A549 (cell line): ENCODE measurements at regions of chr7 and their contacts with region 1.

Region 1: DNA sequence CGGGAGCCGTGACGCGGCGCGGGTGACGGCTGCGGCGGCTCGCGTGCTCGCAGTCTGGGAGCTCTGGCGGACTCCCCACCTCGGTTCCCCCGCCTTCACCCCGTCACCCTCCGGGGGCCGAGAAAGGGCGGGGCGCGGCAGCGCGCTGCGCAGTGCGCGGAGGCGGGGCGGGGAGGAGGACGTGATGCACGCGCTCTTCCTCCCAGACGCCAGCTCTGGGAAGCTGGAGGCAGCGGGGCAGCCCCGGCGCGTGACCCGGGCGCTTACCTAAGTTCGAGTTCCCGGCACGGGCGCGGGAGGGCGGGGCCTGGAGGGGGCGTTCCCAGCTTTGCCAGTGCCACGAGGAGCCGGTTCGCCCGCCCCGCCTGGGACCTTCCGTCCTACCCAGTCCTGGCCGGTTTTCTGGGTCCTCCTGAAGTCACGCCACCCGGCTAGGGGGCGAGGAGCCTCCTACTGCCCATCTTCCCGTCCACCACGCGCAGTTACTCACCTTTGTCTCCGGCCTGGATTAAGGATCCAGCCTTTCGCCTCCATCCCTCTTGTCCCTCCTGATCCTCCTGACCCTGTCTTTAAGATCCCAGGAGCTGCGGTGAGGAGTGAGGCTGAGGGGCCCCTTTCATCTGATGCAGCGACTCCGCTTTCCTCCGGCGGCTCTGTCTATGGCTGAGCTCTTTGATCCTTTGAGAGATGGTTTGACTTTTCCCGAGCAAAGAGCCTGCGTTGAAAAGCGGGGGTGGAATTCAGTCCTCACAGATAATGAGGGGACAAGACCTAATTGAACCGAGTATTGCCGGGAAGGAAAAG is 470 bp upstream of the NAMPT start:
- DNase-seq: peak; percentile 77 to 99
- ATAC-seq: peak; percentile 86 to 90
- H3K4me3 ChIP-seq: peak overlapping the region; percentile 70
- H3K27ac ChIP-seq: peak overlapping the region; percentile 92 to 98
- H3K4me1 ChIP-seq: peaks cover 30% of the 10 kb centered on the region
- CTCF ChIP-seq: no peak
- EP300 ChIP-seq: no peak; a peak in 1 of 5 replicates
- POLR2A ChIP-seq: peak; percentile 46
- RAD21 ChIP-seq: no peak

Region 2: DNA sequence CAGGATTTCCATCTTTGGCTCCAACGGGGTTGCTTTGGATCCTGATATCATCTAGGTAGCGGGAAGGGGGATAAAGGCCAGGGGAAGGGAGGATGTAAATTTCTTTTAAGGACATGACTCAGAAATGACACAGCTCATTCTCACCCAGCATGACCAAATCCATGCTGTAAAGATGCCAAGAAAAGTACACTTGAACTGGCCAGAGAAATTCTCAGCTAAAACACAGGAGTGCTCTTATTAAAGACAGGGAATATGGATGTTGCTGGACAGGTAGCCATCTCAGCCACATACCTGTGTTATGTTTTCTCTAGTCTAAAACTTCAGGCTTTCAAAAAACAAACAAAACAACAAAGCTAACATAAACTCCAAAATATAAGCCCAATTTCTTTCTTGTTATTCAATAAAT is 68.7 kb before region 1 on chr7:
- CTCF ChIA-PET with region 1: no interaction called
- POLR2A ChIA-PET with region 1: interaction called, 11 read pairs
- DNase-seq: peak; percentile 75 to 88
- ATAC-seq: peak; percentile 94 to 95
- H3K4me3 ChIP-seq: peak overlapping the region; percentile 24; the same call in 2 of the 3 replicates
- H3K27ac ChIP-seq: peak overlapping the region; percentile 80 to 87
- H3K4me1 ChIP-seq: peaks cover 22% of the 10 kb centered on the region
- CTCF ChIP-seq: no peak
- EP300 ChIP-seq: no peak
- POLR2A ChIP-seq: no peak
- RAD21 ChIP-seq: peak in 1 of 2 experiments; percentile 4; a peak in 1 of 5 replicates

Region 3: GRCh38 chr7:106346678-106347217 is 61.5 kb after region 1 on chr7:
- CTCF ChIA-PET with region 1: interaction called, 5 read pairs
- POLR2A ChIA-PET with region 1: interaction called, 14 read pairs
- DNase-seq: peak; percentile 21 to 75
- ATAC-seq: peak; percentile 55 to 59; a peak in 5 of 6 replicates
- H3K4me3 ChIP-seq: no peak overlapping the region
- H3K27ac ChIP-seq: peak overlapping the region; percentile 34 to 75; a peak in 5 of 6 replicates
- H3K4me1 ChIP-seq: peaks cover 18% of the 10 kb centered on the region
- CTCF ChIP-seq: no peak
- EP300 ChIP-seq: peak; percentile 74 to 84; a peak in 3 of 5 replicates
- POLR2A ChIP-seq: no peak
- RAD21 ChIP-seq: no peak

Region 4: DNA sequence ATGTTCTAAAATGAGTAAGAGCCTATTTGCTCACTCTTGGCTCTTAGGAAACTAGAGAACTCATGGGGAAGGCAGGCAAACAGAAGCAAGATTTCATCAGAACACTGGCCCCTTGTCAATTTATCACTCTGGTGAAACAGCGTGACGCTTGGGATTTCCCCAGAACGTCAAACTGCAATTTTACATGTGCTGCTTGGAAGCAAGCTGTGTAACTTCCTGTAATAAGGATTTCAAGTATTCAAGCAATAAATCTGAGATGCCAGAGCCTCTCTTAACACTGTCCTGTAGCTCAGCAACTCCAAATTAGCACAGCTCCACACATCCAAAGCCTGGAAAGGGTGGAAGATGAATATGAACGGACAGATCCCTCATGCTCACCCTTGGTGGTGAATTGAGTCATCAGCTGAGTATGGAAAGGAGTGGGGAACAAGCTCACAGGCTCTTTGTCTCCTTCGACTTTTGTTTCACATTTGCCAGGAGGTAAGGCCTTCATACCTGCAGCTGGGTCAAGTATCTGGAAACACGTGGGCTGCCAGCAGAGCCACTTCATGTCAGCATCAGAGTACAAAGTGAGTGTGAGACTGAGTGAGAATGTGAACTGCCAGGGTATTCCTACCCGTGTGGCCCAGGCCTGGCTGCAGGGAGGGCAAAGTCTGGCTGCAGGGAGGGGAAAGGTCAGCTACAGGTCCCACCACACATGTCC is 139.9 kb after region 1 on chr7:
- CTCF ChIA-PET with region 1: no interaction called
- POLR2A ChIA-PET with region 1: interaction called, 36 read pairs
- DNase-seq: peak; percentile 57 to 91
- ATAC-seq: peak; percentile 82 to 86
- H3K4me3 ChIP-seq: no peak overlapping the region
- H3K27ac ChIP-seq: peak overlapping the region; percentile 82 to 90
- H3K4me1 ChIP-seq: peaks cover 39% of the 10 kb centered on the region
- CTCF ChIP-seq: no peak
- EP300 ChIP-seq: peak; percentile 87 to 93; a peak in 4 of 5 replicates
- POLR2A ChIP-seq: no peak
- RAD21 ChIP-seq: peak; percentile 2 to 42; a peak in 3 of 5 replicates

Region 5: GRCh38 chr7:106461993-106462859 is 177.0 kb after region 1 on chr7:
- CTCF ChIA-PET with region 1: interaction called, 12 read pairs
- POLR2A ChIA-PET with region 1: interaction called, 15 read pairs
- DNase-seq: peak in 1 of 2 experiments; percentile 50
- ATAC-seq: peak; percentile 62 to 81
- H3K4me3 ChIP-seq: no peak overlapping the region
- H3K27ac ChIP-seq: peak overlapping the region; percentile 62 to 67
- H3K4me1 ChIP-seq: peaks cover 12% of the 10 kb centered on the region; the same call in 1 of the 3 replicates
- CTCF ChIP-seq: peak; percentile 80
- EP300 ChIP-seq: no peak
- POLR2A ChIP-seq: no peak
- RAD21 ChIP-seq: peak; percentile 78 to 89